PC-3 (cell line): ENCODE measurements at regions of chr5 and their contacts with region 1.

Region 1: DNA sequence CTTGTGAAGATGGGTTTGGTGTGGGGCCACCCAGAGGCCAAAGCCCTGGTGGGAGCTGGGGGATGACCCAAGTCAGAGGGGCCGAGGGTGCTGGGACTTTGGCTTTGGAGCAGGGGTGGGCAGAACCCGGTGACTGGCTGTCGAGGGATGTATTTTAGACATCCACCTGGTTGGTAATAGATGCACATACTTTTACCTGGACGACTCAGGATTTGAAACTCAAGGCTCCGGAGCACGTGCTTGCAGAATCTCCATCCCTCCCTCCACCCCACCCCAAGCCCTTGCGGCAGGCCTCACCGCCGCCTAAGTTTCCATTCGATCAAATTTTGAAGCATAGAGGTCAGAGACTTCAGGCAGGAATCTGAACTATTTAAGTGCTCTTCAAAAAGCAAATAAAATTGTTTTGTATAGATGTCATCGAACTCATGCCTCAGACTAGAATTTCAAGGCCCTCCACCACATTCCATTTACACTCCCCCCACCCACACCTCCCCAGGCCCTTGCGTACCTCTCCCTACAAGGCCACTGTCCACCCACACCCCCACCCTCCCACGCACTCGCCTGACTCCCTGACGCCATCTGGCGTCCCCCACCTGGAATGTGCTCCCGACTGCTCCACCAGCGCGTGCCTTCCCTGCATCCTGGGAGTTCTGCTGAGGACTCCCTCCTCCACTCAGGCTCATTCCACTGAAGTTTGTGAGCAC is 56.6 kb upstream of the RPL26L1 start:
- DNase-seq: peak; percentile 73
- ATAC-seq: peak; percentile 45
- H3K4me3 ChIP-seq: no peak overlapping the region
- H3K27ac ChIP-seq: peak overlapping the region; percentile 96
- H3K4me1 ChIP-seq: peaks cover 48% of the 10 kb centered on the region
- H3K27me3 ChIP-seq: no peaks in the 10 kb centered on the region
- CTCF ChIP-seq: peak; percentile 62

Region 2: DNA sequence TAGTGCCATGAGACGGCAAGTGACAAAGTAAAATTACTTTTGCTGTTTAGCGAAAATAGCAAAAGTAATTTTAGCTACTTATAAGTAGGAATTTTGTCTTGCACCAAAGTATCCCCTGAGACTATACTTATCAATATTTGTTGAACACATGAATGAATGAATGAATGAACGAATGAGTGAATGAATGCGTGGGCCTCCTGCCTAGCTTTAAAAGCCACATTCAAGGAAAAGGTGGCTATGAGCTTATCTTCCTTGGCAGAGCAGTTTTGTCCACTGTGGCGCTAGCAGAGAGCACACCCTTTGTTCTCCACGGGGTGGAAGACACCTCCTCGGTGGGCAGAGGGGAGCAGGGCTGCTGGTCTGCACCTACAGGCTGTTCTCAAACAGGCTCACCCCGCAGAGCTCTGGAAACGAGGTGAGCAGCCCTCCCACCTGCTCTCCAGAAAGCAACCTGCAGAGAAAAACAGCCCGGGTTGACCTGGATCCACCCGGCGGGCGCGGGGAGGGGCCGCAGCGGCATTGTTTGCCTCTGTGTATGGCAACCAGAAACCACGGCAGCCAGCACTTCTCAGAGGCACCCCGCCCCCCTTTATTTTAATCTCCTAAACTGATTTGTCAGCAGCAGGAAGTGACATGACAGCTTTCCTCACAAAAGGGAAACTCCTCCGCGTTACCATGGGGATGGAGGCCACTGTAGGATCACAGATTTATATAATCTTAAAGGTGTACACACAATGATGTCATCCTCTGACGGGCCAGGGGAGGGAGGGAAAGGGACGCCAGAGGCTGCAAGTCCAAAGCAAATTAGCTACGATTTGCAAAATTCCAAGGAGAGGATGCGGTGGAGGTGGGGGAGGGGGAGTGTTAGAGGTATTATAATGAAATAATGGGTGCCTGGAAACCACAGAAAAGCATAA is 137.5 kb before region 1 on chr5:
- CTCF ChIA-PET with region 1: interaction called, 3 read pairs
- POLR2A ChIA-PET with region 1: no interaction called
- intact Hi-C with region 1: loop called (anchors 2 kb)
- DNase-seq: peak; percentile 99
- ATAC-seq: peak; percentile 82
- H3K4me3 ChIP-seq: peak overlapping the region; percentile 63
- H3K27ac ChIP-seq: peak overlapping the region; percentile 77
- H3K4me1 ChIP-seq: peaks cover 40% of the 10 kb centered on the region
- H3K27me3 ChIP-seq: no peaks in the 10 kb centered on the region
- CTCF ChIP-seq: no peak

Region 3: GRCh38 chr5:172868924-172869591 is 33.6 kb before region 1 on chr5:
- CTCF ChIA-PET with region 1: no interaction called
- POLR2A ChIA-PET with region 1: no interaction called
- intact Hi-C with region 1: loop called (anchors 2 kb)
- DNase-seq: peak; percentile 88
- ATAC-seq: peak; percentile 70
- H3K4me3 ChIP-seq: peak overlapping the region; percentile 55
- H3K27ac ChIP-seq: peak overlapping the region; percentile 99
- H3K4me1 ChIP-seq: peaks cover 48% of the 10 kb centered on the region
- H3K27me3 ChIP-seq: no peaks in the 10 kb centered on the region
- CTCF ChIP-seq: peak; percentile 55

Region 4: GRCh38 chr5:173094012-173094661 is 191.5 kb after region 1 on chr5:
- CTCF ChIA-PET with region 1: no interaction called
- POLR2A ChIA-PET with region 1: no interaction called
- intact Hi-C with region 1: no loop called
- DNase-seq: peak; percentile 61
- ATAC-seq: peak; percentile 78
- H3K4me3 ChIP-seq: no peak overlapping the region
- H3K27ac ChIP-seq: no peak overlapping the region
- H3K4me1 ChIP-seq: peaks cover 12% of the 10 kb centered on the region
- H3K27me3 ChIP-seq: no peaks in the 10 kb centered on the region
- CTCF ChIP-seq: no peak